CD8-positive, alpha-beta T cell (primary cell): ENCODE measurements at regions of chr5 and their contacts with region 1.

Region 1: DNA sequence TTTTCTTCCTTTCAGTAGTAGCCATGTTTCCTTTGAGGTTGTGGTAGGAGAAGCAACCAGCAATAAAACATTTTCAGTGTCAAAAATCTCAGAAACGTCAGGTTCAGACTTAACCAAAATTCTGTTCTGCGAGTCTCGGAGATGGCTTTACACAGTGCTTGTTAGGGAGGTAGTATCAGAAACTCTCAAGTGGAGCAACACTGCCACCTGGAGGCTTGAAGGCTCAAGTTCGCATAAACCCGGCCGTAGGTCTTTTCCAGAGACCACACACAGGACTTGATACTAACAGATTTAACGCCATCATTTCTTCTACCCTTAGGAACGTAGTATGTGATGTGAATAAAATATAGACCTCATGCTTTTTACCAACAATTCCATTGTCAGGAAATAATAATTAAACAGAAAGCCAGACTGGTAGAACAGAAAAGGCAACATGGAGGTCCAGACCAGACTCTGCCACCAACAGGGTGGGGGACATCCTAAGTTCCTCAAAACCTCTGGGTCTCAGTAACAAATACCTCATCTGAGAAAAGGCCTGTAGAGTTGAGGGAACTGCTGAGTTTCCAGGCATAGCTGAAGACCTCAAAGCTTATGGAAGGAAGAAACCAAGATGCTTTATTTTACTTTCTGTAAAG is 8.5 kb downstream of the PTGER4 start:
- DNase-seq: peak; percentile 72 to 93 (median 88)
- ATAC-seq: peak; percentile 69
- H3K4me3 ChIP-seq: peak overlapping the region in 1 of 2 experiments; percentile 77
- H3K4me3 Mint-ChIP-seq: peak overlapping the region; percentile 94
- H3K27ac ChIP-seq: peak overlapping the region; percentile 1 to 70
- H3K27ac Mint-ChIP-seq: peak overlapping the region; percentile 91
- H3K4me1 ChIP-seq: peaks cover 54% of the 10 kb centered on the region
- H3K4me1 Mint-ChIP-seq: peaks cover 83% of the 10 kb centered on the region
- H3K27me3 ChIP-seq: no peaks in the 10 kb centered on the region
- H3K27me3 Mint-ChIP-seq: no peaks in the 10 kb centered on the region
- CTCF ChIP-seq: peak; percentile 73

Region 2: GRCh38 chr5:39217365-39218281 is 1470.6 kb before region 1 on chr5:
- CTCF ChIA-PET with region 1: no interaction called
- POLR2A ChIA-PET with region 1: no interaction called
- intact Hi-C with region 1: loop called in 1 of 2 experiments (anchors 10 kb)
- DNase-seq: peak; percentile 56 to 92 (median 81)
- ATAC-seq: peak; percentile 61
- H3K4me3 ChIP-seq: peak overlapping the region; percentile 41 to 59
- H3K4me3 Mint-ChIP-seq: peak overlapping the region; percentile 79
- H3K27ac ChIP-seq: peak overlapping the region; percentile 53 to 70
- H3K27ac Mint-ChIP-seq: peak overlapping the region; percentile 92
- H3K4me1 ChIP-seq: peaks cover 47% of the 10 kb centered on the region
- H3K4me1 Mint-ChIP-seq: peaks cover 74% of the 10 kb centered on the region
- H3K27me3 ChIP-seq: no peaks in the 10 kb centered on the region
- H3K27me3 Mint-ChIP-seq: no peaks in the 10 kb centered on the region
- CTCF ChIP-seq: peak; percentile 96

Region 3: GRCh38 chr5:39948867-39949468 is 739.3 kb before region 1 on chr5:
- CTCF ChIA-PET with region 1: interaction called, 30 read pairs
- POLR2A ChIA-PET with region 1: no interaction called
- intact Hi-C with region 1: loop called (anchors 1 kb)
- DNase-seq: peak; percentile 7 to 84 (median 63)
- ATAC-seq: peak; percentile 87
- H3K4me3 ChIP-seq: no peak overlapping the region
- H3K4me3 Mint-ChIP-seq: no peak overlapping the region
- H3K27ac ChIP-seq: no peak overlapping the region
- H3K27ac Mint-ChIP-seq: no peak overlapping the region
- H3K4me1 ChIP-seq: no peaks in the 10 kb centered on the region
- H3K4me1 Mint-ChIP-seq: peaks cover 2% of the 10 kb centered on the region
- H3K27me3 ChIP-seq: no peaks in the 10 kb centered on the region
- H3K27me3 Mint-ChIP-seq: no peaks in the 10 kb centered on the region
- CTCF ChIP-seq: peak; percentile 72

Region 4: DNA sequence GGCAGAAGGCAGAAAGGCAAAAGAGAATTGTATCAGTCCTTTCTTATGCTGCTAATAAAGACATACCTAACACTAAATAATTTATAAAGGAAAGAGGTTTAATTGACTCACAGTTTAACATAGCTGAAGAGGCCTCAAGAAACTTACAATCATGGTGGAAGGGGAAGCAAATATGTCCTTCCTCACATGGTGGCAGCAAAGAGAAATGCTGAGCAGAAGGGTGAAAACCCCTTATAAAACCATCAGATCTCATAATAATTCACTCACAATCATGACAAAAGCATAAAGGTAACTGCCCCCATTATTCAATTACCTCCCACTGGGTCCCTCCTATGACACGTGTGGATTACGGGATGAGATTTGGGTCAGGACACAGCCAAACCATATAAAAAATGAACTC is 321.0 kb before region 1 on chr5:
- CTCF ChIA-PET with region 1: interaction called, 3 read pairs
- POLR2A ChIA-PET with region 1: no interaction called
- intact Hi-C with region 1: loop called (anchors 1 kb)
- DNase-seq: peak in 4 of 9 experiments; percentile 26 to 72 (median 48)
- ATAC-seq: peak; percentile 66
- H3K4me3 ChIP-seq: no peak overlapping the region
- H3K4me3 Mint-ChIP-seq: no peak overlapping the region
- H3K27ac ChIP-seq: no peak overlapping the region
- H3K27ac Mint-ChIP-seq: peak overlapping the region; percentile 42
- H3K4me1 ChIP-seq: no peaks in the 10 kb centered on the region
- H3K4me1 Mint-ChIP-seq: peaks cover 6% of the 10 kb centered on the region
- H3K27me3 ChIP-seq: no peaks in the 10 kb centered on the region
- H3K27me3 Mint-ChIP-seq: no peaks in the 10 kb centered on the region
- CTCF ChIP-seq: peak; percentile 44

Region 5: DNA sequence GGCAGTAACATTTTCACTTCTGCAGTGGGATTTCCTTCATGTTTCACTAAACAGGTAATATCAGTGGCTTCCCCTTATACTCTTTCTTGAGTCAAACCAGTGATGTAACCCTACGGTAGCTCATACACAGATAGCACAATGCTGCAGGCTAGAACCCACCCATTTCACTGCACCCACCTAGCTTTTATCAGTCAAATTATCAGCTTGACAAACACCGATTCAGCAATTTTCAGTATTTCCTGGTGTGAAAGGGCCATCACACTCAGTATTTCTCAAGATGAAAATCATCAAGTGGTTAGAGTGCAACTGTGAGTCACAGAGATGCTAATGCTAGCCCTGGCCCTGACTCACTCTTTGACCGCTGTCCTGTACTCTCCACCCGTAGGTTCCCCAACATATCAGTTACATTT is 250.8 kb before region 1 on chr5:
- CTCF ChIA-PET with region 1: interaction called, 12 read pairs
- POLR2A ChIA-PET with region 1: interaction called, 4 read pairs
- intact Hi-C with region 1: loop called (anchors 2 kb)
- DNase-seq: peak in 6 of 9 experiments; percentile 17 to 85 (median 32)
- ATAC-seq: peak; percentile 20
- H3K4me3 ChIP-seq: no peak overlapping the region
- H3K4me3 Mint-ChIP-seq: no peak overlapping the region
- H3K27ac ChIP-seq: peak overlapping the region; percentile 51 to 91
- H3K27ac Mint-ChIP-seq: peak overlapping the region; percentile 86
- H3K4me1 ChIP-seq: peaks cover 40% of the 10 kb centered on the region
- H3K4me1 Mint-ChIP-seq: peaks cover 67% of the 10 kb centered on the region
- H3K27me3 ChIP-seq: no peaks in the 10 kb centered on the region
- H3K27me3 Mint-ChIP-seq: no peaks in the 10 kb centered on the region
- CTCF ChIP-seq: no peak

Region 6: DNA sequence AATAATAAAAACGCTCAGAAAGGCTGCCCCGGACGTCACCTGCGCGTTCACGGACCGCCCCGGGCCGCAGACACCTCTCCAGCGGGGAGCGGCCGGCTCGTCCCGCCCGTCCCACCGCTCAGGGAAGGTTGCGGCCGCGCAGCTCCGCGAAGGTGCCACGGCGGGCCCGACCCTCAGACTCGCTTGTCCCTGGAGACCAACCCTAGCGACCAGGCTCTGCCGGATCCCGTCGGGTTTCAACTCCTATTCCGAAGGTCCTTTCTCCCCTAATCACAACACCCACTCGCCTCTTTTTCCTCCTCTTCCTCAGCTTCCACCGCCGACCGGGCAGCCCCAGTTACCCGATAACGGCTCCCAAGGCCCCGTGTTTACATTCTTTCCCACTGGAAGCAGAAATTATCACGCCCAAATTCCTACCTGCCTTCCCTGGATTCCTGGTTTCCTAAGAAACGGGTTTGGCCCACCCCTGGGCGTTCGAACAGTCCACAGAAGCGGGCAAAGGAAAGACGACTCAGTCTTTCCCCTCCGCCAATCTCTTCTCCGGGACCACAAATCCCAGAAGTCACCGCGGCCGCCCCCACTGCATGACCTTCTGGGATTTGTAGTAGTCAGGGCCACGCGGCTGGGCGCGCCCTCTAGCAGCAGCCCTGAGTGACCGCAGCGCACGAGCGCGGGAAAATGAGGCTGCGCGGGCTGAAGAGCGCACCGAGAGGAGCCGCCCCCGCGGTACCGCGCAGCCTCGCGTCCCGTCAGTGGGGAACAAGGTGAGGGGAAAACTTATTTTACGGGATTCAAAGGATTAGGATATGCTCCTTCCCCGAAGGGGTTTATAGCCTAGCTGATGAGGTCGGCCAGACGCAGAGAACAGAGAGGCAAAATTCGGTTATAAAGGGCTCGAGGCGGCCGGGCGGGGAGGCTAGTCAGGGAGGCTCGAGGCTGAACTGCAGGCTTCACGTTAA is 67.4 kb after region 1 on chr5 and contains the start of gene TTC33:
- CTCF ChIA-PET with region 1: no interaction called
- POLR2A ChIA-PET with region 1: no interaction called
- intact Hi-C with region 1: loop called in 1 of 2 experiments (anchors 2 kb)
- DNase-seq: peak; percentile 86 to 96 (median 94)
- ATAC-seq: peak; percentile 85
- H3K4me3 ChIP-seq: peak within 1 kb of the TSS; percentile 93 to 98
- H3K4me3 Mint-ChIP-seq: no peak within 1 kb of the TSS
- H3K27ac ChIP-seq: peak within 1 kb of the TSS; percentile 79 to 89
- H3K27ac Mint-ChIP-seq: no peak within 1 kb of the TSS
- H3K4me1 ChIP-seq: peaks cover 18% of the 10 kb centered on the region
- H3K4me1 Mint-ChIP-seq: peaks cover 24% of the 10 kb centered on the region
- H3K27me3 ChIP-seq: no peaks in the 10 kb centered on the region
- H3K27me3 Mint-ChIP-seq: no peaks in the 10 kb centered on the region
- CTCF ChIP-seq: peak; percentile 62
- total RNA-seq, gene TTC33: 6.7 to 7.1 TPM